ENCODE measurements at regions of chr15 and their contacts with region 1.

Region 1: GRCh38 chr15:28037969-28038590 is 61.0 kb downstream of the OCA2 start:
- DNase-seq: no peak
- H3K4me3 ChIP-seq: no peak overlapping the region
- H3K27ac ChIP-seq: no peak overlapping the region
- H3K4me1 ChIP-seq: no peaks in the 10 kb centered on the region
- H3K27me3 ChIP-seq: peaks cover 8% of the 10 kb centered on the region
- CTCF ChIP-seq: no peak

Region 2: DNA sequence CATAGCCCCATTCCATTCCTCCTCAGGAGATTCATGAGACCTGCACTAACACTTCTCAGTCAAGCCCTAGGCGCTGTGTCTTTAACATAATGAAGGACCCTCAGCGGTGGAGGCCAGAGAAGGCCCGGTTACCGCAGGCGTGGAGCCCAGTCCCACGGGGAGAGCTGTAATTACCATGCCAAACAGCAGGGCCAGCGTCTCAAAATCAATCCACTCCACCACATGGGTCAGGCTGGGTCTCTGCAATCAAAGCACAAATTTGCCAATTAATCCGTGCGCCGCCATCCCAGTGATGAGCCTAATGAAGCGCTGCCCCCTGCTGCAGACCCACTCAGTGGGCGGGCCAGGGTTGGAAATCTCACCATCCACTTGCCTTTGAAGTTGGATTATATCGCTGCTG is 48.7 kb before region 1 on chr15:
- intact Hi-C with region 1: loop called (anchors 5 kb)
- DNase-seq: no peak
- H3K4me3 ChIP-seq: no peak overlapping the region
- H3K27ac ChIP-seq: no peak overlapping the region
- H3K4me1 ChIP-seq: no peaks in the 10 kb centered on the region
- H3K27me3 ChIP-seq: peaks cover 40% of the 10 kb centered on the region
- CTCF ChIP-seq: no peak